ENCODE measurements at regions of chr3 and their contacts with region 1.

Region 1: GRCh38 chr3:52154117-52155094 is at the start of gene POC1A:
- DNase-seq: peak; percentile 95
- ATAC-seq: peak; percentile 89
- H3K4me3 Mint-ChIP-seq: peak within 1 kb of the TSS; percentile 80
- H3K27ac Mint-ChIP-seq: peak within 1 kb of the TSS; percentile 93
- H3K4me1 Mint-ChIP-seq: peaks cover 19% of the 10 kb centered on the region
- H3K27me3 Mint-ChIP-seq: no peaks in the 10 kb centered on the region
- total RNA-seq, gene POC1A: 23.4 to 26.1 TPM

Region 2: DNA sequence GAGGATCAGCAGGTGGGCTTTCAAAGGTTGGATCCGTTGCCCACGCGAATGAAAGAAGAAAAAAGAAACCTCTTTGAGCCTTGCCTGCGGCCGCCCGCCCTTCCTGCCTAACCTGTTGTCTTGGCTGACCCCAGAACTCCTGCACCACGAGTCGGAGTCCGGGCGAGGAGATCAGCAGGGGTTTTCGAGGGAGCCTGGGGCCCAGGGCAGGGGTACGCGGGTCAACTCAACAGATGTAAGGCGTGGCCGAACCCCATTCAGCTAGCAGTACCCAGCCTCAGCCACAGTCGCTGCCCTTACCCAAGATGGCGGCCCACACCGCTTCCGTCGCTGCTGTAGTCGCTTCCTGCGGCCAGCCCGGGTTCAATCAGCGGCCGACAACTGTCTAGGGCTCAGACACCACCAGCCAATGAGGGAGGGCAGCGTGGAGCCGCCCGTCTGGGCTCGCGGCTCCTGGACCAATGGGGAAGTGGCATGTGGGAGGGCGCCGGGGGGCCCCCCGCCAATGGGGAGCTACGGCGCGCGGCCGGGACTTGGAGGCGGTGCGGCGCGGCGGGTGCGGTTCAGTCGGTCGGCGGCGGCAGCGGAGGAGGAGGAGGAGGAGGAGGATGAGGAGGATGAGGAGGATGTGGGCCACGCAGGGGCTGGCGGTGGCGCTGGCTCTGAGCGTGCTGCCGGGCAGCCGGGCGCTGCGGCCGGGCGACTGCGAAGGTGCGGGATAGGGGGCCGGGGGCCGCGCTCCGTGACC is 769.5 kb before region 1 on chr3 and contains the start of gene MANF:
- CTCF ChIA-PET with region 1: no interaction called
- POLR2A ChIA-PET with region 1: no interaction called
- intact Hi-C with region 1: loop called in 1 of 2 experiments (anchors 10 kb)
- DNase-seq: peak; percentile 99
- ATAC-seq: peak; percentile 97
- H3K4me3 Mint-ChIP-seq: peak within 1 kb of the TSS; percentile 93
- H3K27ac Mint-ChIP-seq: peak within 1 kb of the TSS; percentile 99
- H3K4me1 Mint-ChIP-seq: peaks cover 46% of the 10 kb centered on the region
- H3K27me3 Mint-ChIP-seq: no peaks in the 10 kb centered on the region
- total RNA-seq, gene MANF: 124 to 129 TPM

Region 3: DNA sequence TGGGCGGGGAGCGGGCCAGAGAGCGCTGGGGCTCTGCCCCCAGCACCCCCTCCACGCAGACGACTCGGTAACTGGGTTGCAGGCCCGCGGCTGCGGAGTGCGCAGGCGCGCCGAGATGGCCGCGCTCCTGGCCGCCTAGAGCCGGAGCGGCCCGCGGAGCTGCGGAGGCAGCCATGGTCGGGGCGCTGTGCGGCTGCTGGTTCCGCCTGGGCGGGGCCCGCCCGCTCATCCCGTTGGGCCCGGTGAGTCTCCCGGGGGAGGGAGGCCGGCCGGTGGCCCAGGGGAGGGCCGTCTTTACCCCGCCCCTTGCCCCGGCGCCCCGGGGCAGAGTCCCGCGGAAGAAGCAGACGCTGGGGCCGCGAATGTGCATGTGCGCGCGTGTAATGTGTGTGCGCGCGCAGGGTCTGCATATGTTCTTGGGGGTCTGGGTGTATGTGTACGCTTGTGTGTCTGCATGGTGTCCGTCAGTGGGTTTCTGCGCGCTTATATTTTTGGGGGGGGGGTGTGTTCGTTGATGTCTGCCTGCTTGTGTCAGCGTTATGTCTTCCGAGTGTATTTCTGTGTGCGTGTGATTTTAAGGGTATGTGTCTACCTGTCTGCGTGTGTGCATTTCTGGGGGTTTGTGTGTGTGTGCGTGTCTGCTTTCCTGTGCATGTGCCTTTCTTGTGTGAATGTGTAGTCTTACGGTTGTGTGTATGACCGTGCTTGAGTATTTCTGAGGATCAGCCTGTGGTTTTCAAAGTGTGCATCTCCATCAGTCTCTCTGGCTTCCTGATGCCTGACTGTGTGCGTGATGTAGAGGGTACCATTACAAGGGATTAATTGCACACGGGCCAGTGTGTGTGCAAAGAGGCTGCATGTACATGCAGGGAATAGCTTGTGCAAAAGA is 179.2 kb before region 1 on chr3 and contains the start of gene ABHD14A:
- CTCF ChIA-PET with region 1: interaction called, 3 read pairs
- POLR2A ChIA-PET with region 1: no interaction called
- intact Hi-C with region 1: loop called in 1 of 2 experiments (anchors 2 kb)
- DNase-seq: peak; percentile 81
- ATAC-seq: peak; percentile 70
- H3K4me3 Mint-ChIP-seq: peak within 1 kb of the TSS; percentile 97
- H3K27ac Mint-ChIP-seq: peak within 1 kb of the TSS; percentile 97
- H3K4me1 Mint-ChIP-seq: peaks cover 34% of the 10 kb centered on the region
- H3K27me3 Mint-ChIP-seq: no peaks in the 10 kb centered on the region
- total RNA-seq, gene ABHD14A: 6.3 to 7.5 TPM

Region 4: GRCh38 chr3:52197842-52198668 is 43.6 kb after region 1 on chr3 and contains the start of gene ALAS1:
- CTCF ChIA-PET with region 1: no interaction called
- POLR2A ChIA-PET with region 1: no interaction called
- intact Hi-C with region 1: loop called (anchors 1 to 2 kb)
- DNase-seq: peak; percentile 97
- ATAC-seq: peak; percentile 95
- H3K4me3 Mint-ChIP-seq: peak within 1 kb of the TSS; percentile 96
- H3K27ac Mint-ChIP-seq: peak within 1 kb of the TSS; percentile 91
- H3K4me1 Mint-ChIP-seq: peaks cover 48% of the 10 kb centered on the region
- H3K27me3 Mint-ChIP-seq: no peaks in the 10 kb centered on the region
- total RNA-seq, gene ALAS1: 52.8 to 68.7 TPM

Region 5: DNA sequence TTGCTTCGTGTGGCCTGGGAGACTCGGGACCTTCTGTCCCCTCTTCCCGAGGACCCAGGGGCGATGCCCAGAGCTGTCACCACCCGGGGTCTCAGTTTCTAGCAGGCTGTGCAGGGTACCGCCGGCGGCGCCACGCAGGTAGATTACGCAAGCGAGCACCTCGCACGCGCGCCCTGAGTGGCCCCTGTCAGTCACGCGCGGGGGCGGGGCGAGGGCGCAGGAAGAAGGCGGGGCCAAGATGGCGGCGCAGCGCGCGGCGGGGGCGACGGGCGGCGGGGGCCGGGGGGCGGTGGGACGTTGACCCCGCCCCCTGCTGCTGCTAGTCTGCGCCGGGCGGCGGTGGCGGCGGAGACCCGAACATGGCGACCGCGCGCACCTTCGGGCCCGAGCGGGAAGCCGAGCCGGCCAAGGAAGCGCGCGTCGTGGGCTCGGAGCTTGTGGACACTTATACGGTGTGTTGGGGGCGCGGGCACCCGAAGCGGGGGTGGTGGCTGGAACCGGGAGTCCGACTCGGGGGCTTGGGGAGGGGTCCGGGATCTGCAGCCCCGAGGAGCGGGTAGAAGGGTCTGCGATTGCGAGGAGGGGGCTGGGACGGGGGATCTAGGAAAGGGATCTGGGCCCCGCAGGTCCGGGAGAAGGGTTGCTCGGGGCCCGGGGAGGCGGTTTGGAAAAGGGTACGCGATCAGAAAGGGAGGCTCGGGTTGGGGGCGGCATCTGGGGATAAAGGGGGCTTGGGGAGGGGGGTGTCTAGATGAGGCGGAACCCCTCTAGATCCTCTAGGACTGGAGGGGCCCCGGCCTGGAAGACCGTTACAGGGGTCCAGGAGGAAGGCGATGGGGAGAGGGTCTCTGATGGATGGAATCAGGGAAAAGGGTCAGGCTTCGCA is 301.1 kb after region 1 on chr3 and contains the start of gene NISCH:
- CTCF ChIA-PET with region 1: no interaction called
- POLR2A ChIA-PET with region 1: interaction called, 4 read pairs
- intact Hi-C with region 1: loop called in 1 of 2 experiments (anchors 1 kb)
- DNase-seq: peak; percentile 98
- ATAC-seq: peak; percentile 88
- H3K4me3 Mint-ChIP-seq: peak within 1 kb of the TSS; percentile 96
- H3K27ac Mint-ChIP-seq: peak within 1 kb of the TSS; percentile 95
- H3K4me1 Mint-ChIP-seq: peaks cover 36% of the 10 kb centered on the region
- H3K27me3 Mint-ChIP-seq: no peaks in the 10 kb centered on the region
- total RNA-seq, gene NISCH: 61.4 to 68.9 TPM

Region 6: DNA sequence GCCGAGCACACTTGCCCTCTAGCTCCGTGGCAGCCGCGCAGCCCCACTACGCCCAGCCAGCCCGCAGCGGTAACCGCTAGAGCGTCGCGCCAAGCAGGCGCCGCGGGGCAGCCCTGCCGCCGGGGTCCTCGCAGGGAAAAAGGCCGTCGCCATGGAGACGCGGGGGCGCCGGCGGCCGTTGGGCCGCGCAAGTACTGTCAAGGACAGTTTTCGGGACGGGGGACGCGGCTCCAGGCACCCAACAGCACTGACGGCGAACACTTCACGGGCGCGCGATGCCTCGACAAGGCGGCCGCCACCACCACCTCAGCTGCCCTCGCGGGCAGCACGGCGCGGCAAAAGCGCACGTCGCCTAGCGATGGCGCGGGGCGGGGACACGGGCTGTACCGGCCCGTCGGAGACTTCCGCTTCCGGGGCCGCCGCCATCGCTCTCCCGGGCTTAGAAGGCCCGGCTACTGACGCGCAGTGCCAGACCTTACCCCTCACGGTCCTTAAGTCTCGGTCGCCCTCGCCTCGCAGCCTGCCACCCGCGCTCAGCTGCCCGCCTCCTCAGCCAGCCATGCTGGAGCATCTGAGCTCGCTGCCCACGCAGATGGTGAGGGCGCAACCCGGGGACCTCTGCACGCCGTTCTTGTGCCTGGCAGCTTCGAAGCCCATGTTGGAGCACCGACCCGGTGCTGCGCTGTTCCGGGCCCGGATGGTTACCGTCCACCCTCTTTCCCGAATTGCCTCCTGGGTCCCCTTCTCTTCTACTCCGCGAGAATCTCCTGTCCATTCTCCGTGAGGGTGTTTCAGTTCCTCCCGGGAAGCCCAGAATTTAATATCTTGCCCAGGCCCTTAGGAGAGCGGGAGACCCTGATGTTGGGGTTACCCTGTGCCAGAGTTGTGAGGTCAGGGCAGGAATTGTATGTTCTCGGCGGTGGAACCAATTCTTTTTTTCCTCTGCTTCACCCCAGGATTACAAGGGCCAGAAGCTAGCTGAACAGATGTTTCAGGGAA is 551.6 kb after region 1 on chr3 and contains the starts of genes GLT8D1 and SPCS1:
- CTCF ChIA-PET with region 1: no interaction called
- POLR2A ChIA-PET with region 1: no interaction called
- intact Hi-C with region 1: loop called in 1 of 2 experiments (anchors 5 kb)
- DNase-seq: peak; percentile 92
- ATAC-seq: peak; percentile 94
- H3K4me3 Mint-ChIP-seq: peak within 1 kb of the TSS; percentile 89
- H3K27ac Mint-ChIP-seq: peak within 1 kb of the TSS; percentile 90
- H3K4me1 Mint-ChIP-seq: peaks cover 28% of the 10 kb centered on the region
- H3K27me3 Mint-ChIP-seq: no peaks in the 10 kb centered on the region
- total RNA-seq, gene GLT8D1: 35.2 to 38.0 TPM
- total RNA-seq, gene SPCS1: 111 to 120 TPM